GM23248 (cell line): ENCODE measurements at regions of chr3 and their contacts with region 1.

Region 1: DNA sequence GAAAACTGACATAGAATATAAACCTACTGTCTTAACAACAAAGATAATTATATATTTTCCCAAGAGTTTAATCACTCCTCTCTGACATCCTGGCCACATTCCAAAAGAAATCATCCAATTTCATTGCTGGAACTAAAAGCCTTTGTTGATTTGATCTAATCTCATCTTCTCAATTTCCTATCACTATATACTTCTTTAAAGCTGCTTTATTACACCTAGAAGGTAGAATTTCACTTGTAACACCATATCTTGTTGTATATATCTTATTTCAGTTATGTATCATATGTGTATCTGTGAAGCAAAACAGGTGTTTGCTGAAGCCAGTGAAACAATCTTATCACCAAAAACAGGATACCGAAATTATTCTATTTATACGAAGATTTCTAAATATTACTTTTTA is 740.2 kb downstream of the ROBO1 start:
- DNase-seq: no peak
- H3K4me3 ChIP-seq: no peak overlapping the region
- H3K27ac ChIP-seq: no peak overlapping the region
- H3K4me1 ChIP-seq: peaks cover 1% of the 10 kb centered on the region; the same call in 1 of the 2 replicates
- H3K27me3 ChIP-seq: no peaks in the 10 kb centered on the region

Region 2: DNA sequence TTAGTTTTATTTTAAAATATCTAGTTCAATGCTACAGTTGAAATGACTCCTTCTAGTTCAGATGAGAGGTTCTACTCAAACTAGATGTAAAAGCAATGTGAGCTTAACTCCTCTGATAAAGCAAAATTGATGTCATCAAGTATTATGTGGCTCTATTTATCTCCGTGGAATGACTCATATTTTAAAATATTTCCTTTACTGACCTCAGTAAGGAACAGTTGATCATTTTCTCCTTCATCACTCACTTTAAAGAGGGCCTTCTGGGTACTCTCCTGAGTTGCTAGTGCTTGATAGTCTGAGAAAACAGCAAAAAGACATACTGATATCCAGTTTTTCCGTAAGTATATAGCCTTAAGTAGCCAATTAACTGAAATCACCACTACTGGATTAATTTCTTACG is 888.4 kb before region 1 on chr3:
- in situ Hi-C with region 1: no loop called
- DNase-seq: peak; percentile 29
- H3K4me3 ChIP-seq: no peak overlapping the region
- H3K27ac ChIP-seq: no peak overlapping the region
- H3K4me1 ChIP-seq: peaks cover 5% of the 10 kb centered on the region
- H3K27me3 ChIP-seq: no peaks in the 10 kb centered on the region

Region 3: GRCh38 chr3:78666470-78666800 is 361.2 kb before region 1 on chr3:
- in situ Hi-C with region 1: loop called (anchors 10 kb)
- DNase-seq: peak; percentile 66
- H3K4me3 ChIP-seq: peak overlapping the region; percentile 33; the same call in 1 of the 2 replicates
- H3K27ac ChIP-seq: peak overlapping the region; percentile 12; the same call in 1 of the 2 replicates
- H3K4me1 ChIP-seq: peaks cover 12% of the 10 kb centered on the region
- H3K27me3 ChIP-seq: no peaks in the 10 kb centered on the region